Heart right ventricle (tissue), 16 donors: ENCODE measurements at regions of chr2 and their contacts with region 1.

Region 1: DNA sequence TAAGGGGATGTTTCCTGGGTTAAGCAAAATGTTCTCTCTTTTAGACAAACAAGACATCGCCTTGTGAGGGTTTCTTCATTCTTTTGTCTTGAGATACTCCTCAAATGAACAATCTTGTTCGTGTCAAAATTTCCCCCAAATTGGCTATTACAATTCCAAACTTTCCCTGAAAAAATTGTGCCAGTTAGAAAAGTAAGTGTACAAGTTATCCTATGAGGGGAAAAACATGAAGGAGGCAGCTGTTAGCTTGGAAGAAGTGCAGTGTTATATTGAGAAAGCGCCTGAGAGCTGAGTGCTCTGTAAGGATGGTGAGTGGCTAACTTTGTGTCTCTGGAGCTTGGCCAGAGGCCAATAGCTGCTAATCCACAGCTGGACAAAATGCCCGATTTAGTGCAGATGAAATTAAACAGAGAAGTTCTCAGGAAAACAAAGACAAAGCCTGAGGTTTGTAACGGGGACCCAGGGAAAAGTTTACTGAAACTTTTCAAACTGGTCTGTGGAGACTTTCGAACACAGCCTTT is 14.1 kb upstream of the PLEKHH2 start:
- DNase-seq: peak in 1 of 2 donors; percentile 36
- ATAC-seq: peak in 6 of 8 donors; percentile 68 to 80 (median 73)
- H3K4me3 ChIP-seq: no peak overlapping the region
- H3K27ac ChIP-seq: peak overlapping the region in 5 of 10 donors; percentile 4 to 42 (median 17)
- H3K4me1 ChIP-seq: no peaks in the 10 kb centered on the region
- H3K27me3 ChIP-seq: peaks cover 0 to 15% (median 0%) of the 10 kb centered on the region in 7 donors
- CTCF ChIP-seq: no peak

Region 2: GRCh38 chr2:43595603-43596412 is 27.2 kb before region 1 on chr2 and contains the start of gene THADA:
- intact Hi-C with region 1: loop called in 1 of 10 experiments (anchors 1 kb)
- DNase-seq: peak; percentile 97 to 100
- ATAC-seq: peak; percentile 99 to 100 (median 99)
- H3K4me3 ChIP-seq: peak within 1 kb of the TSS; percentile 63 to 87 (median 78)
- H3K27ac ChIP-seq: peak within 1 kb of the TSS; percentile 36 to 97 (median 92)
- H3K4me1 ChIP-seq: peaks cover 3 to 25% (median 16%) of the 10 kb centered on the region in 9 donors
- H3K27me3 ChIP-seq: no peaks in the 10 kb centered on the region
- CTCF ChIP-seq: no peak
- total RNA-seq, gene THADA: 12.4 to 18.0 (median 15.4) TPM

Region 3: DNA sequence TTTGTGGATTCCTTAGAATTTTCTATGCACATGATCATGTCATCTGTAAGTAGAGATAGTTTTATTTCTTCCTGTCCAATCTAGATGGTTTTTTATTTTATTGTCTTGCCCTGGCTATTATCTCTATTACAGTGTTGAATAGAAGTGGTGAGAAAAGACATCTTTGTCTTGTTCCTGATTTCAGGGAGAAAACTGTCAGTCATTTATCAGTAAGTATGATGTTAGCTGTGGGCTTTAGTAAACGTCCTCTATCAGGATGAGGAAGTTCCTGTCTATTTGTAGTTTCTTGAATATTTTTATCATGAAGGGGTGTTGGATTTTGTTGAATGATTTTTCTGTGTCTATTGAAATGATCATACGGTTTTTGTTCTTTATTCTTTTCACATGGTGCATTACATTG is 19.4 kb after region 1 on chr2:
- intact Hi-C with region 1: loop called in 1 of 10 experiments (anchors 2 kb)
- DNase-seq: no peak
- ATAC-seq: no peak
- H3K4me3 ChIP-seq: no peak overlapping the region
- H3K27ac ChIP-seq: no peak overlapping the region
- H3K4me1 ChIP-seq: peaks cover 0 to 6% (median 3%) of the 10 kb centered on the region in 9 donors
- H3K27me3 ChIP-seq: peaks cover 0 to 13% (median 3%) of the 10 kb centered on the region in 7 donors
- CTCF ChIP-seq: no peak